B cell (primary cell): ENCODE measurements at regions of chr3 and their contacts with region 1.

Region 1: GRCh38 chr3:98329392-98330124 is 24.1 kb upstream of the OR5K4 start:
- DNase-seq: peak; percentile 22
- ATAC-seq: no peak
- H3K4me3 ChIP-seq: no peak overlapping the region
- H3K4me3 Mint-ChIP-seq: no peak overlapping the region
- H3K27ac ChIP-seq: no peak overlapping the region
- H3K27ac Mint-ChIP-seq: no peak overlapping the region
- H3K4me1 ChIP-seq: no peaks in the 10 kb centered on the region
- H3K4me1 Mint-ChIP-seq: no peaks in the 10 kb centered on the region
- H3K27me3 ChIP-seq: no peaks in the 10 kb centered on the region
- H3K27me3 Mint-ChIP-seq: peaks cover 4% of the 10 kb centered on the region
- CTCF ChIP-seq: peak; percentile 50

Region 2: GRCh38 chr3:97793420-97794019 is 536.0 kb before region 1 on chr3:
- CTCF ChIA-PET with region 1: no interaction called
- POLR2A ChIA-PET with region 1: no interaction called
- intact Hi-C with region 1: loop called (anchors 10 kb)
- DNase-seq: peak; percentile 71
- ATAC-seq: peak; percentile 21
- H3K4me3 ChIP-seq: no peak overlapping the region
- H3K4me3 Mint-ChIP-seq: no peak overlapping the region
- H3K27ac ChIP-seq: no peak overlapping the region
- H3K27ac Mint-ChIP-seq: no peak overlapping the region
- H3K4me1 ChIP-seq: no peaks in the 10 kb centered on the region
- H3K4me1 Mint-ChIP-seq: no peaks in the 10 kb centered on the region
- H3K27me3 ChIP-seq: no peaks in the 10 kb centered on the region
- H3K27me3 Mint-ChIP-seq: no peaks in the 10 kb centered on the region
- CTCF ChIP-seq: peak; percentile 90

Region 3: DNA sequence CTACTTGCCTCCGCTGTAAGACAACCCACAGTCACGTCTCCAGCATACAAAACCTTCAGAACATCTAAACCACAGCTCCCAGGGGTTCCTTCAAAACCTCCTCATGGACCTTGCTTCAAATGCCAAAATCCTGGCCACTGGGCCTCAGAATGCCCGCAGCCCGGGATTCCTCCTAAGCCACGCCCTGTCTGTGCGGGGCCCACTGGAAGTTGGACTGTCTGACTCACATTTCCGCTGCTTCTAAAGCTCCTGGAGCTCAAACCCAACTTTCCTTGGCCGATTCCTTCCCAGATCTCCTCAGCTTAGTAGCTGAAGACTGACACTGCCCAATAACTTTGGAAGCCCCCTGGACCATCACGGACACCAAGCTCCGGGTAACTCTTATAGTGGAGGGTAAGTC is 83.4 kb before region 1 on chr3:
- CTCF ChIA-PET with region 1: no interaction called
- POLR2A ChIA-PET with region 1: no interaction called
- intact Hi-C with region 1: no loop called
- DNase-seq: no peak
- ATAC-seq: no peak
- H3K4me3 ChIP-seq: no peak overlapping the region
- H3K4me3 Mint-ChIP-seq: no peak overlapping the region
- H3K27ac ChIP-seq: no peak overlapping the region
- H3K27ac Mint-ChIP-seq: no peak overlapping the region
- H3K4me1 ChIP-seq: no peaks in the 10 kb centered on the region
- H3K4me1 Mint-ChIP-seq: no peaks in the 10 kb centered on the region
- H3K27me3 ChIP-seq: no peaks in the 10 kb centered on the region
- H3K27me3 Mint-ChIP-seq: no peaks in the 10 kb centered on the region
- CTCF ChIP-seq: no peak

Region 4: GRCh38 chr3:98350082-98350481 is 20.5 kb after region 1 on chr3:
- CTCF ChIA-PET with region 1: no interaction called
- POLR2A ChIA-PET with region 1: no interaction called
- intact Hi-C with region 1: no loop called
- DNase-seq: no peak
- ATAC-seq: no peak
- H3K4me3 ChIP-seq: no peak overlapping the region
- H3K4me3 Mint-ChIP-seq: no peak overlapping the region
- H3K27ac ChIP-seq: no peak overlapping the region
- H3K27ac Mint-ChIP-seq: no peak overlapping the region
- H3K4me1 ChIP-seq: no peaks in the 10 kb centered on the region
- H3K4me1 Mint-ChIP-seq: no peaks in the 10 kb centered on the region
- H3K27me3 ChIP-seq: no peaks in the 10 kb centered on the region
- H3K27me3 Mint-ChIP-seq: peaks cover 11% of the 10 kb centered on the region
- CTCF ChIP-seq: no peak

Region 5: DNA sequence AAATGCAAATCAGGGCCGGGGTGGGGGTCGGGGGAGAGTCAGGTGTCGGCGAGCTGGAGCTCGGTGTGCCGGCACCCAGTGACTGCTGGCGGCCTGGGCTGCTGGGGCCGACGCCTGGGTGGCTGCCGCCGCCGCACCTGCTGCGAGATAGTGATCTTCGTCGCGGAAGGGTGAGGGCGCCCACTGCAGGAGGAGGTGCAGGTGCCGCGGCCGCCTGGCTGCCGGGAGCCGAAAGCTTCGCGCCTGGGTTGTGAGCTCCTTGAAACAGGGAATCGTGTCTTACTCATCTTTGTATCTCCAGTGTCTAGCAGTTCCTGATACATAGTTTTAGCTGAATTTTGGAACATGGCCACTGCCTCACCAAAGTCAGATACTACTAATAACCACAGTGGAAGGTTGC is 327.9 kb after region 1 on chr3:
- CTCF ChIA-PET with region 1: no interaction called
- POLR2A ChIA-PET with region 1: no interaction called
- intact Hi-C with region 1: no loop called
- DNase-seq: peak; percentile 10
- ATAC-seq: no peak
- H3K4me3 ChIP-seq: no peak overlapping the region
- H3K4me3 Mint-ChIP-seq: no peak overlapping the region
- H3K27ac ChIP-seq: no peak overlapping the region
- H3K27ac Mint-ChIP-seq: no peak overlapping the region
- H3K4me1 ChIP-seq: no peaks in the 10 kb centered on the region
- H3K4me1 Mint-ChIP-seq: peaks cover 5% of the 10 kb centered on the region
- H3K27me3 ChIP-seq: peaks cover 0 to 3% (median 0%) of the 10 kb centered on the region in 4 experiments
- H3K27me3 Mint-ChIP-seq: peaks cover 15% of the 10 kb centered on the region
- CTCF ChIP-seq: no peak